ENCODE measurements at regions of chr12 and their contacts with region 1.

Region 1: GRCh38 chr12:89451841-89452251 is 72.8 kb downstream of the GALNT4 start:
- DNase-seq: no peak
- H3K4me3 ChIP-seq: no peak overlapping the region
- H3K4me1 ChIP-seq: no peaks in the 10 kb centered on the region
- H3K27me3 ChIP-seq: no peaks in the 10 kb centered on the region

Region 2: GRCh38 chr12:89019408-89020120 is 432.3 kb before region 1 on chr12:
- in situ Hi-C with region 1: loop called (anchors 10 kb)
- DNase-seq: peak; percentile 82 to 84
- H3K4me3 ChIP-seq: no peak overlapping the region
- H3K4me1 ChIP-seq: no peaks in the 10 kb centered on the region
- H3K27me3 ChIP-seq: peaks cover 2% of the 10 kb centered on the region; the same call in 1 of the 2 replicates

Region 3: GRCh38 chr12:89893972-89894706 is 442.3 kb after region 1 on chr12:
- in situ Hi-C with region 1: no loop called
- DNase-seq: no peak
- H3K4me3 ChIP-seq: no peak overlapping the region
- H3K4me1 ChIP-seq: no peaks in the 10 kb centered on the region
- H3K27me3 ChIP-seq: no peaks in the 10 kb centered on the region

Measured in HAP-1 (cell line).